ENCODE measurements at regions of chr5 and their contacts with region 1.

Region 1: DNA sequence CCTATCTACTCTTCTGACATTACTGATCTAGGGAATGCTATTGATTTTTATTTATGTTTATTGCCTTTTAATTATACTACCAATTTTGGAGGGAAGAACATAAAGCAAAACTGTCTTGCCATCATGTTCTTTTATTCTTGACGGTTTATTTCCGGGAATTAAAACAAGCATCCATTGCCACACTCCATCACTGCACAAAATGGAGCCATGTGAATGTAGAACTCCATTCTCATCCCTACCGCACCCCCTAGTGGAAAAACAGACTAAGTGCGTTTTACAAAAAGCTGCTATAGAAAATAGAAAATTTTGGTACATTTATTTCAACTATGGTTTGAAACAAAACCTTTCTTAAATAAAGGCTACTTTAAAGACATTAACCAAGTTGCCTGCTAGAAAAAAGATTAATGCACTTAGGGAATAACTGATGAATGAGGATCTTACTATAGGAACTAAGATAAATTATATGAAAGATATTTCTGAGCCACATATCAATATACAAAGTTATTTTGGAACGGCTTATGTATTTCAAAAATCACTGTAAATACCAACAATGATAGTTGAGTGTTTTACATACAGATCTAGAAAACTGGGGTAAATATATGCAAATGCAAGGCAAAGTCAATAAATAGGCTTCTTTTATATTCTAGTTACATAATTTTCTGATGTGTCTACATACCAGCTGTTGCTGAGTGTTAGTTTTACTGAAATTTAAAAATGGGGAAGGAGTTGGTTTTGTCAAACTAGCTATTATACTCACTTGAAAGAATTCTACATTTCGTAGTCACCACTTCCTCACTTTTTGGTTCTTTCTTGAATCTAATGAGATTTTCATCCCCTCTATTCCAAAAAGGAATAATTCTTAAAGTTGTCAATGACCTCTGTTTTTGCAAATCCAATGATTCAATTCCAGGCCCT is 26.5 kb downstream of the OXCT1 start:
- DNase-seq: no peak
- ATAC-seq: peak in 2 of 4 donors; percentile 74 to 81
- H3K4me3 ChIP-seq: no peak overlapping the region
- H3K27ac ChIP-seq: no peak overlapping the region
- H3K4me1 ChIP-seq: no peaks in the 10 kb centered on the region
- H3K27me3 ChIP-seq: no peaks in the 10 kb centered on the region
- CTCF ChIP-seq: peak; percentile 82

Region 2: GRCh38 chr5:40904205-40904993 is 939.3 kb before region 1 on chr5:
- intact Hi-C with region 1: loop called in 1 of 2 experiments (anchors 10 kb)
- DNase-seq: peak in 1 of 2 donors; percentile 38
- ATAC-seq: peak; percentile 51 to 86 (median 78)
- H3K4me3 ChIP-seq: no peak overlapping the region
- H3K27ac ChIP-seq: no peak overlapping the region
- H3K4me1 ChIP-seq: peaks cover 9% of the 10 kb centered on the region
- H3K27me3 ChIP-seq: no peaks in the 10 kb centered on the region
- CTCF ChIP-seq: peak; percentile 78

Region 3: DNA sequence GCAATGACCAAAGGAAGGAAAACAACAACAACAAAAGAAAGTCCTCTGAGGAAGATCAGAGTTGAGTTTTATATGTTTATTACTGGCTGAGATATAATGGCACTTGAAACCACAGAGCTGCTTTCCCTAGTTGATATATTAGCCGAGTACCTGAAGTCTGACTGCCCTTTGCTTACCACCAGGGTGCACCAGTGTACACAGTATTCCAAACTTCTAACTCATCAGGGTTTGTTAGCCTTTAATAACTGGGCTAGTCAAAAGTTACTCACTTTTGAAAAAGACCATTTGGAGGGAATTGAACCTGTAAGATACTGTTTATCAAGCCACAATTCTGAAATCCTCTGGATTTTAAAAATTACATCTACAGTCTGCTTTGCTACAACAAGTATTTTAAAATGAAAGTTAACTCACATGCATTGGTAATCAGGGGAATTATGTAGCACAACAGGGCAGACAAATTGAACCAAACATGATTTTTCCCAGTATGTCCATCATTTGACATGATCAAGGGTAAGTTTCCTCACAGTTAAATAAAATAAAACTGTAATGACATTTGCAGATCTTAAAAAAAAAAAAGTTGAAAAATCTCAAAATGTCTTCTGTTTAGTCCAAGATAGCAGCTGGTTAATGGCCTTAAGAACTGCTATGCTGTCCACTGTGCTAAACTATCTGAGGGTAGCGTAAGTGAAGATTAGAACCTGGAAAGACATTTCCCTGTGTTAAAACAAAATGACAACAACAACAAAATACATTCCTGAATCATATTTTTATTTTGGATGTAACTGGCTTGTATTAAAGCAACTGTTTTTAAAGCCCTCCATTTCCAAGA is 573.1 kb before region 1 on chr5:
- intact Hi-C with region 1: loop called in 1 of 2 experiments (anchors 2 kb)
- DNase-seq: no peak
- ATAC-seq: peak; percentile 57 to 83 (median 70)
- H3K4me3 ChIP-seq: no peak overlapping the region
- H3K27ac ChIP-seq: no peak overlapping the region
- H3K4me1 ChIP-seq: no peaks in the 10 kb centered on the region
- H3K27me3 ChIP-seq: no peaks in the 10 kb centered on the region
- CTCF ChIP-seq: peak; percentile 67

Region 4: DNA sequence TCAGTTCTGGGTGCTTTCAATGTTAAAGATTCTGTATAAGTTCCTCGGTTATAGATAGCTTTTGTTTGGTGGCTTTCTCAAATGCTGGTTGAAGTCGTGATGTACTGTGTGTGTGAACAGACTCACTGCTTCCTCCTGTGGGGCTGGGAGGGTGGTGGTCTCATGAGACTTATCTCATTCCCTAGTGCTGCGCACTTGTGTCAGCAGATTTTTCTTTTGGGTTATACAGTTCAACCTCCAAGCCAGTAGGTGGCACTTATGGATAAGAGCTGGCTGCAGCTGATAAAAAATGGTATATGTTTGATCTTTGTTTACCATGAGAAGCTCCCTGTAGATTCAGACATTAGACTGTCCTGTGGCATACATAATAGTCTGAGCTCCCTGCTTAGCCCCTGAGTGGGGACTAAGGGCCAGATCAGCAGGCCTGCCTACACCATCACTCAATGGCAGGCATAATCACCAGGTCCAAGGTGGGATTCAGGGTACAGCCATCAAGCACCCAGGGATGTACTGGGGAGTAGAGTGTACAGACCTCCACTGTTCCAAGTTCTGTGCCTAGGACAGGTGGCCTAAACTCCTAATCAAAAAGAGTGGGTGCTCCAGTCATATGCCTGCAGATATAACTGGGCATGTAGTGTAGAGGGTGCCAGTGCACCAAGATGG is 147.7 kb before region 1 on chr5:
- intact Hi-C with region 1: loop called in 1 of 2 experiments (anchors 10 kb)
- DNase-seq: no peak
- ATAC-seq: no peak
- H3K4me3 ChIP-seq: no peak overlapping the region
- H3K27ac ChIP-seq: no peak overlapping the region
- H3K4me1 ChIP-seq: no peaks in the 10 kb centered on the region
- H3K27me3 ChIP-seq: no peaks in the 10 kb centered on the region
- CTCF ChIP-seq: no peak

Measured in psoas muscle (tissue), 8 donors.